Esophagus muscularis mucosa (tissue), 4 donors: ENCODE measurements at regions of chr7 and their contacts with region 1.

Region 1: DNA sequence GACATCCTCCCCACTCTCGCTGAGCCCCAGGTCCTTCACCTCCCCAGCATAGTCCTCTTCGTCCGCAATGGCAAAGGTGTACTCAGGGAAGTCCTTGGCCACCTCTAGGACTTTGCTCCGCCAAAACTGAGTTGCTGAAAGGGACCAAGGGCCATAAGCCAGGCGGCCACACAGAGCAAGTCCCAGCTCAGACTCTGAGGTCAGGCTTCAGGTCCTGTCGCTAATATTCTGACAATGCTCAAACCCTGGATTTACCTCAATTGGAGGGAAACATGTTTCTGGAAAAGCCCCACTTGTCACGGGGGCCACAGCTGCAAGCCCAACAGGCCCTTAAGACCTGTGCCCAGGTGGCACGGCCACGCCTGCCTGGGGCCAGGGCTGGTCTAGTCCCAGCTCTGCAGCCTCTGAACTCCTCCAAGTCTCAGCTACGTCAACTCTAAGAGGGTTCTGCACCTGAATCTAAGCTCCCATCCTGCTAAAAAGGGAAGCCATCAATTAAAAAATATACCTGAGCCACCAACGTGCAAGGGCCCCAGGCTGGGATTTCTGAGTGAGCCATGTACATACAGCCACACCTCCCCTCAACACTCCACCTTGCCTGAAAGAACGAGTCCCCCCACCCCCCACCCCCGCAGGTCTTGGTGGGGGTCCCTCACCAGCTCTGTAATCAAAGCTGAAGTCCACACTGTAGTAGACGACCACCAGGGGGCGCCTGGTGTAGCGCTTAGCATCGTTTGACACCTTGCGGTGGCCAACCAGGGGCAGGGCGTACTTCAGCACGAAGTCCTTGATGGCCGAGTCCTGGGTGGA is 22.9 kb downstream of the PDIA4 start:
- DNase-seq: peak; percentile 94
- H3K4me3 ChIP-seq: no peak overlapping the region
- H3K27ac ChIP-seq: no peak overlapping the region
- H3K4me1 ChIP-seq: peaks cover 0 to 10% (median 8%) of the 10 kb centered on the region in 4 donors
- H3K27me3 ChIP-seq: no peaks in the 10 kb centered on the region
- CTCF ChIP-seq: peak; percentile 77 to 89 (median 88)
- EP300 ChIP-seq: no peak
- POLR2A ChIP-seq: no peak

Region 2: DNA sequence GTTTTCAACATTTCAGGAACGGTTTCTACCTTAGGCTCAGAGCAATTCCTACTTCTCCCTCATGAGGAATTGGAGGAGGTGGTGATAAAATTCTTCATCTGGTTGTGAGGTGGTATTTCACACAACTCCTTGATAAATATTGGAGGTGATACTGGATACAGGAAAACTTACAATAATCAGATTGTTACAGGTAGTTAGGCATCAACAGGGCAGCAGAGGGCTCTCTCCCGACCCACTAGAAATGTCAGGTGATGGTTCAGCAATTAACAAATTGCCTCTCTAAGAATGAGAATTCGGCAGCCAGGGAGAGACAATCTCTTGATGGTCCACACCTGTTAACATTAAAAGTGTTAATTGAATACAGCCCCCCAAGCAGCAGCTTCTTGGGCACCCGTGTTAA is 62.4 kb after region 1 on chr7:
- intact Hi-C with region 1: loop called (anchors 1 kb)
- DNase-seq: no peak
- H3K4me3 ChIP-seq: no peak overlapping the region
- H3K27ac ChIP-seq: no peak overlapping the region
- H3K4me1 ChIP-seq: peaks cover 0 to 12% (median 5%) of the 10 kb centered on the region in 4 donors
- H3K27me3 ChIP-seq: no peaks in the 10 kb centered on the region
- CTCF ChIP-seq: no peak
- EP300 ChIP-seq: no peak
- POLR2A ChIP-seq: no peak

Region 3: GRCh38 chr7:149090397-149091195 is 85.2 kb after region 1 on chr7 and contains the start of gene ZNF786:
- intact Hi-C with region 1: loop called (anchors 2 kb)
- DNase-seq: peak; percentile 93
- H3K4me3 ChIP-seq: peak within 1 kb of the TSS; percentile 70 to 99 (median 88)
- H3K27ac ChIP-seq: peak within 1 kb of the TSS; percentile 89 to 97 (median 92)
- H3K4me1 ChIP-seq: peaks cover 9 to 21% (median 19%) of the 10 kb centered on the region in 4 donors
- H3K27me3 ChIP-seq: no peaks in the 10 kb centered on the region
- CTCF ChIP-seq: peak; percentile 93 to 97 (median 93)
- EP300 ChIP-seq: no peak
- POLR2A ChIP-seq: peak; percentile 36
- total RNA-seq, gene ZNF786: 4.5 to 10.7 (median 5.6) TPM